Activated CD8-positive, alpha-beta T cell treated with anti-CD3 and anti-CD28 coated beads for 36 hours (primary cell): ENCODE measurements at regions of chr19 and their contacts with region 1.

Region 1: DNA sequence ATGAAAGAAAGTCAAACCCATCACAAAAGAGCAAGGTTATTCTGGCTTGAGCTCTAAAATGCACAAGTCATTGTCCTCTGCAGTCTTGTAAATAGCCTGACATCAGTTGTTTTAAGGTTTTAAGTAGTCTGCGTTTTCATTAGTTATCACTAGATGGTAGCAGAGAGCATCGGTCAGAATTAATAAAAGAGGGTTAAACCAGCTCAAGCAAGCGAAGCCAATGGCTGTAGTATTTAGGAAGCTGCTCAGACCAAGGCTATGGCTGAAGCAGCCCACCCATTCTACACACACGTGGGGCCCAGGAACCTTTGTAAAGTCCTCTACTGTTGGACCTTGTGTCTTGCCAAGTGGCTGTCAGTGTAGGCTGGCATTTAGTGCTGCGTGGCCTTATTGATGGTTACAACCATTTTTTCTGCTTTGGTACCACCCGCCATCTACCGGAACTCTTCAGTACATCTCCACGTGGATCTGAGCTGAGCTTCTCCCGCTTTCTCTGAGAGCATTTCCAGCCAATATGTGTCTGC is 13.3 kb upstream of the ZNF57 start:
- DNase-seq: no peak
- ATAC-seq: peak; percentile 69
- H3K4me3 Mint-ChIP-seq: no peak overlapping the region
- H3K27ac Mint-ChIP-seq: no peak overlapping the region
- H3K4me1 Mint-ChIP-seq: peaks cover 11% of the 10 kb centered on the region
- H3K27me3 Mint-ChIP-seq: peaks cover 3% of the 10 kb centered on the region
- CTCF ChIP-seq: peak; percentile 76

Region 2: DNA sequence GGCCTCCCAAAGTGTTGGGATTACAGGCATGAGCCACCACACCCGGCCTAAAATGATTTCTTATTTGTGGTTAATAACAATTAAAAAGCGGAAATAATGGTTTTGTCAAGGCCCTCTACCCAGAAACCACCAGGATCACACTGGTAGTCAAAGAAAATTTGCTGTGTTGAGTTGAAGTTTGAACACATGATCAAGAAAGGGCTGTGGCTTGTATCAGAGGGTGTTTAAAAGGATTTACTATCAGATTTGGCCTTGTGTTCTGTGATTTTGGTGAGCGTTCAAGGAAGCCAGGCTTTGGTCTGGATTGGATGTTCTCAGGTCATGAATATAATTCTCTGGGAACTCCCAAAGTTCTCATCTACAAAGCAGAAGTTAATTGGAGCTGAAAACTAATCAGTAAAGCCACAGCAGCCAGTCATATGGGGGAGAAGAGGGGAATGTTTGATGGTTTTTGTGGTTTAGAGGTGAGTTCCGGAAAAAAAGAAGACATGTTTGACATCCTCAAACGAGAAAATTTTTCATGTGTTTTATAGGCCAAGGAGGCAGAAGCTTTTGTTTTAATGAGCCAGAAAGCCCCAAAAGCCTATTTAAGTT is 30.9 kb before region 1 on chr19:
- CTCF ChIA-PET with region 1: no interaction called
- POLR2A ChIA-PET with region 1: no interaction called
- intact Hi-C with region 1: no loop called
- DNase-seq: no peak
- ATAC-seq: peak; percentile 49
- H3K4me3 Mint-ChIP-seq: no peak overlapping the region
- H3K27ac Mint-ChIP-seq: peak overlapping the region; percentile 76
- H3K4me1 Mint-ChIP-seq: peaks cover 19% of the 10 kb centered on the region
- H3K27me3 Mint-ChIP-seq: no peaks in the 10 kb centered on the region
- CTCF ChIP-seq: no peak

Region 3: GRCh38 chr19:2923510-2923909 is 36.1 kb after region 1 on chr19:
- CTCF ChIA-PET with region 1: interaction called, 12 read pairs
- POLR2A ChIA-PET with region 1: interaction called, 3 read pairs
- intact Hi-C with region 1: no loop called
- DNase-seq: no peak
- ATAC-seq: no peak
- H3K4me3 Mint-ChIP-seq: no peak overlapping the region
- H3K27ac Mint-ChIP-seq: no peak overlapping the region
- H3K4me1 Mint-ChIP-seq: no peaks in the 10 kb centered on the region
- H3K27me3 Mint-ChIP-seq: no peaks in the 10 kb centered on the region
- CTCF ChIP-seq: no peak